ENCODE measurements at regions of chr4 and their contacts with region 1.

Region 1: DNA sequence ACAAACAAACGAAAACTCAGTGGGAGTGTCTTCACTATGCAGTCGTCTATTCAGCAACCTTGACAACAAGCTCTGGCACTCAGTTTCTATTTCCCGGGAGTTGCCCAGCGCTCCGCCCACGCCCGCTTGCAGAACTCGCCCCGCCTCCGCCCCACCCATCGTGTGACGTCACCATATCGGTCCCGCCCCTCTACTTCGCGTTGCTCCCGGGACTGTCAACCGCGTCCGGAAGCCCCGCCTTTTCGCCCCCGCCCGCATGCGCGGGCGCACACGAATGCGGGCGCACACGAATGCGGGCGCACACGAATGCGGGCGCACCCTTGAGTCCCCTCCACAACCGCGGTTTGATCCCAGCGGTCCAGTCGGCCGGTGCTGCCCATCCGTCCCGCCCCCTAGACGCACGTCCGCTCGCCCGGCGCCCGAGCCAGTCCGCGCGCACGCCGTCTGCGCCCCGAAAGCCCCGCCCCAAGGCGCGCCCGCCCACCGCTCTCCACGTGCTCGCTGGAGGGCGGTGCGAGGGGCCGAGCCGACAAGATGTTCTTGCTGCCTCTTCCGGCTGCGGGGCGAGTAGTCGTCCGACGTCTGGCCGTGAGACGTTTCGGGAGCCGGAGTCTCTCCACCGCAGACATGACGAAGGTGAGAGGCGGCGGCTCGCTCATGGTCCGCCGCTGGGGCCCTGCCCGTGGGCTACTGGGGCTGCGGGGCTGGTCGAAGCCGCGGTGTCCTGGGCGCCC is at the start of gene LAP3:
- DNase-seq: peak; percentile 86 to 97
- H3K4me3 ChIP-seq: peak within 1 kb of the TSS; percentile 87
- H3K27ac ChIP-seq: peak within 1 kb of the TSS; percentile 37
- H3K4me1 ChIP-seq: 0 out of 2 replicates have a peak, but pooled peaks cover 3% of the 10 kb centered on the region
- H3K27me3 ChIP-seq: no peaks in the 10 kb centered on the region
- CTCF ChIP-seq: no peak
- total RNA-seq, gene LAP3: 43.9 and 45.0 TPM in 2 replicates

Region 2: DNA sequence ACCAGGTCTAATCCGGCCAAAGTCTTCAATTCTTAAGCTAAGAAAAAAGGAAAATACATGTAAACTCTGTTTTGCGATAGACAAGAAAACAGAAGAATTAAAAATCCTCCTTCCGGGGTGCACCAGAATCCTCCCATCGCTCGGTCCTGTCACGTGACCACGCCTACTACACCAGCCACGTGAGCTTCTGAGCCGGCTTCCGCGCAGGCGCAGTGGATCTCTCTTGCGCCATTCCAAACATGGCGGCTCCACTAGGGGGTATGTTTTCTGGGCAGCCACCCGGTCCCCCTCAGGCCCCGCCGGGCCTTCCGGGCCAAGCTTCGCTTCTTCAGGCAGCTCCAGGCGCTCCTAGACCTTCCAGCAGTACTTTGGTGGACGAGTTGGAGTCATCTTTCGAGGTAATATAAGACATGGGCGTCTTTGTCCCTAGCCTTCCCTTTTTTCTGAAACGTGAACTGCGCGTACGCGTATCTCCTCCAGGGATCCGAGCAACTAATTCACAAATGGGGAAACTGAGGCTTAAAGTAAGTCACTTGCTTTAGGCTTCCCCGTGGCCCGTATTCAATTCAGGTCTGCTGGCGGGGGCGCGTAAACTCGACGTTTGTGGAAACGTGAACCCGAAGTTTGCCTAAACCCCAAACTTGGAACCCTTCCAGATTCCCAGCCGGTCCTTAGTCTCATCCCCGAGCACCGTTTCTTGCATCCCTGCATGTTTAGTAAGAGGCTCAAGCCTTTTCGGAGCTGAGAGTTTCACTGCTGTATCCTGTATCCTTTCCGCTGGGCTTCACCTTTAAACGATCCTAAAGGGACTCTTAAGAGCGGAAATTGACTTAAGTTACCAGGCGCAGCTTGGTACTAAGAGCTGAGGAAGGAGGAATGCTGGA is 37.6 kb after region 1 on chr4 and contains the start of gene MED28:
- CTCF ChIA-PET with region 1: no interaction called
- POLR2A ChIA-PET with region 1: interaction called, 4 read pairs
- intact Hi-C with region 1: loop called (anchors 2 kb)
- DNase-seq: peak; percentile 81 to 87
- H3K4me3 ChIP-seq: peak within 1 kb of the TSS; percentile 72
- H3K27ac ChIP-seq: peak within 1 kb of the TSS; percentile 51
- H3K4me1 ChIP-seq: no peaks in the 10 kb centered on the region
- H3K27me3 ChIP-seq: no peaks in the 10 kb centered on the region
- CTCF ChIP-seq: no peak
- total RNA-seq, gene MED28: 39.0 and 43.1 TPM in 2 replicates

Region 3: GRCh38 chr4:17662694-17663093 is 85.6 kb after region 1 on chr4:
- CTCF ChIA-PET with region 1: no interaction called
- POLR2A ChIA-PET with region 1: no interaction called
- intact Hi-C with region 1: no loop called
- DNase-seq: no peak
- H3K4me3 ChIP-seq: no peak overlapping the region
- H3K27ac ChIP-seq: no peak overlapping the region
- H3K4me1 ChIP-seq: no peaks in the 10 kb centered on the region
- H3K27me3 ChIP-seq: no peaks in the 10 kb centered on the region
- CTCF ChIP-seq: no peak

Region 4: DNA sequence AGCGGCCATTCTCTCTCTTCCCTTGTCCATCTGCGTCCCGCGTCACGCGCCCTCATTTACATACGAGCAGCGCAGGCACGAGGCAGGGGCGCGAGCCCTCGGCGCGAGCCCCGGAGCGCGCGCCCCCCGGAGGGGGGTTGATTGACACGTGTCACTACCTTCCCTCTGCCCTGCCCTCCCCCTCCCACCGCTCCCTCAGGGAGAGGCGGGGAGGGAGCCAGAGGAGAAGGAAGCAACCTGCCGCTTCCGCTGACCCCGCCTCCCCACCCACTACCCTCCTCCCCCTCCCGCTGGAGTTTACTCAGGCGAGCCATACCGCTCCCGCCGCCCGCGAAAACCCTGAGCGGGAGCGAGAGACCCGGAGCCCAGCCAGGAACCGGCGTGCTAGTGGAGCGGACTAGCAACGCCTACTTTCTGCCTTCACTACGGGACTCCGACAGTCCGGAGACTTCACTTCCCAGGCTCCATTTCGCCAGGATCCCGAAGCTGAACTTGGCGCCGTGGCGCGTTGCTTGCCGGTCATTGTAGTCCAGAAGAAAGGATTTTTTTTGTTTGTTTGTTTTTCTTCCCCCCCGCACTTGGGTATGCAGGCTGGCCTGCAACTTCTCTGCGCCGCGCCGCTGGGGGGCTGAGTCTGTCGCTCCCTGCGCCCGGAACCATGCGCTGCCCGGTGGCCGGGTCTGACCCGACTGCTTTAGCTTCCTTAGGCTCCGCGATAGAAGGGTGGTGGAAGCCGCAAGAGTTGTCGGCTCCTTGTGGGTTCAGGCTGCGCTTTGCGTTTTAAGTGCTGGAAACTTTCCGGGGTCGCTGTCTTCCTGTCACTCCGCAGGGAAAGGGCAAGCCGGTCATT is 444.8 kb after region 1 on chr4 and contains the start of gene LCORL:
- CTCF ChIA-PET with region 1: no interaction called
- POLR2A ChIA-PET with region 1: no interaction called
- intact Hi-C with region 1: loop called (anchors 1 kb)
- DNase-seq: peak; percentile 89 to 92
- H3K4me3 ChIP-seq: peak within 1 kb of the TSS; percentile 75
- H3K27ac ChIP-seq: peak within 1 kb of the TSS; percentile 63
- H3K4me1 ChIP-seq: peaks cover 7% of the 10 kb centered on the region
- H3K27me3 ChIP-seq: no peaks in the 10 kb centered on the region
- CTCF ChIP-seq: no peak; the same call in 1 of the 2 replicates
- total RNA-seq, gene LCORL: 13.8 and 22.9 TPM in 2 replicates

Region 5: GRCh38 chr4:18042754-18043153 is 465.7 kb after region 1 on chr4:
- CTCF ChIA-PET with region 1: no interaction called
- POLR2A ChIA-PET with region 1: no interaction called
- intact Hi-C with region 1: no loop called
- DNase-seq: no peak
- H3K4me3 ChIP-seq: no peak overlapping the region
- H3K27ac ChIP-seq: no peak overlapping the region
- H3K4me1 ChIP-seq: no peaks in the 10 kb centered on the region
- H3K27me3 ChIP-seq: no peaks in the 10 kb centered on the region
- CTCF ChIP-seq: peak; percentile 39; the same call in 1 of the 2 replicates